AG04450 (cell line): ENCODE measurements at regions of chr10 and their contacts with region 1.

Region 1: GRCh38 chr10:3043512-3044368 is 23.6 kb upstream of the PFKP start:
- DNase-seq: no peak
- H3K4me3 ChIP-seq: no peak overlapping the region
- H3K27ac ChIP-seq: peak overlapping the region; percentile 40
- H3K27me3 ChIP-seq: no peaks in the 10 kb centered on the region
- CTCF ChIP-seq: peak; percentile 86

Region 2: DNA sequence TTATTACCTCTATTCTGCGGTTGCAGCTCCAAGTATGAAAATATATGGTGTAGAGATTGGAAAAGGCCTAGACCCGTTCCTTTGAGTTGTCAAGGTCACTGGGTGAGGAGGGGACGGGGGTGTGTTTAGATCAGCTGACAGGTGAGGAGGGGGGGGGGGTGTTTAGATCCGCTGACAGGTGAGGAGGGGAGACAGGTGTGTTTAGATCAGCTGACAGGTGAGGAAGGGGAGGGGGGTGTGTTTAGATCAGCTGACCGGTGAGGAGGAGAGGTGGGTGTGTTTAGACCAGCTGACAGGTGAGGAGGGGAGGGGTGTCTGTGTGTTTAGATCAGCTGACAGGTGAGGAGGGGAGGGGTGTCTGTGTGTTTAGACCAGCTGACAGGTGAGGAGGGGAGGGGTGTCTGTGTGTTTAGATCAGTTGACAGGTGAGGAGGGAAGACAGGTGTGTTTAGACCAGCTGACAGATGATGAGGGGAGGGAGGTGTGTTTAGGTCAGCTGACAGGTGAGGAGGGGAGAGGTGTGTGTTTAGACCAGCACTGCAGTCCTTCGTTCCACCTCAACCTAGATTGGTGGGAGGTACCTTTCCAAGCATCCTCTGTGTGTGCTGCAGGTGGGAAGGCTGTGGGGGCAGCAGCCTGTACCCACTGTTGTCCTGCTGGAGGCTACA is 651.5 kb before region 1 on chr10:
- CTCF ChIA-PET with region 1: no interaction called
- POLR2A ChIA-PET with region 1: no interaction called
- DNase-seq: no peak
- H3K4me3 ChIP-seq: no peak overlapping the region
- H3K27ac ChIP-seq: no peak overlapping the region
- H3K27me3 ChIP-seq: no peaks in the 10 kb centered on the region
- CTCF ChIP-seq: no peak

Region 3: DNA sequence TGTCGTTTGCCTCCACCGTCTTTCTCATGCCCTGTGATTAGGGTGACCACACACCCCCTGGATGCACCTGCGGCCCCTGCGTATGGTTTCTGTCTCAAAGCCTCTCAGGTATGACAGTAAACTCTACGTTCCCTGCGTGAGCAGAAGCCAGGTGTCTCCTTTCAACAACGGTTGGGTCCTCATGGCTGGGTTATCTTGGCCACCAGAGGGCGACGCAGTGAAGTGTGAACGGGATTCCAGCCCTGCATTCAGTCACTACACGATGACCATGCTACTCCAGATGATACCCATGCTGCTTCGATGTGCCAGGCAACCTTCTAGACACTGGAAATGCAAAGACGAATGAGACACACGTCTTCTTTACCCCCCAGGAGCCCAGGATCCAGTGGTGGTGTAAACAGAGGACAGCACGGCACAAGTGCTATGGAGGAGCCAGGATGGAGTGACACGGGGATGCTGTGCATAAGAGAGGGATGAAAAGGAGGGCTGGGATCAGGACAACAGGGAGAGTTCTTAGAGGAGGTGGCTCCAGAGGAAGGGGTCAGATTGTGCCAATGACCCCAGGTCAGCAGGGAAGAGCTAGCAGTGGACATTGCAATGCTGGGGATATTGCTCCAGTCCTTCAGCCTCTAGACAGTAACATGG is 204.5 kb before region 1 on chr10:
- CTCF ChIA-PET with region 1: interaction called, 18 read pairs
- POLR2A ChIA-PET with region 1: no interaction called
- DNase-seq: no peak
- H3K4me3 ChIP-seq: no peak overlapping the region
- H3K27ac ChIP-seq: no peak overlapping the region
- H3K27me3 ChIP-seq: no peaks in the 10 kb centered on the region
- CTCF ChIP-seq: peak; percentile 49

Region 4: DNA sequence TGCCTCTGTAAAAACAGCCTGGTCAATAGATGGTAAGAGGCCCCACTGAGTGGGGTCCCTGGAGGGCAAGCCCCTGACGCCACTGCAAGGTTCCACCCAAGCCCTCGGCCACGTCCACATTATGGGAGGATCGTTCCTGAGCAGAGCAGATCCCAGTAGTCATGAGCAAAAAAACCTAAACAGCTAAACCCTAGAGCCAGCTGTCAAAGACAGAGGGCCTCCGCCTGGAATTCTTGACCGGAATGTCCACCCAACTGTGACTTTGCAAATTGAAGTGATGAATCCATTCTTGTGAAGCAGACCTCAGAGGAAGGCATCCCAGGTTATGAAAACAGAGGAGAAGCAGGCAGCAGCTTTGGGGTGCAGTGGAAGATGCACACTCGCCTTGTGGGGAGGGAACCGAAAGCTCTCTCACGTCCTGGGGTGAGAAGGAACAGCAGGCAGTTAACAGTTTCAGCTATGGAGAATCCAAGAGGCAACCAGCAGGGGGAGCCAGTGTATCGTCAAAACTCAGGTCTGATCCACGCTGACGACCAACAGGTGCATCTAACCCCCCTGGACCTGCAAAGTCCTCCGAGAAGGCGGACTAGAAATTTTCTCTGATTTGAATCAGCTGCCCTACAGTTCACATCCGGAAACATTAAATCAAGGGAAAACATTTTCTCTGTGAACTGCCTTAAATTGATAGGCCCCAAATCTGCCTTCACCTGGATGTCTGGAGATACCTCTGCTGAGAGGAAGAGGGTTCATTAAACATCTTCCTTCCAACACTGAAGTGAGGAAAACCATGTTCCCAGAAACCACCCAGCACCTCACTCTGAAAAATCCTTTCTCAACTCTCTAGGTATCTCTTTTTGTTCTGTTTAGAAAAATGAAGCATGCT is 115.5 kb before region 1 on chr10:
- CTCF ChIA-PET with region 1: interaction called, 247 read pairs
- POLR2A ChIA-PET with region 1: no interaction called
- DNase-seq: peak; percentile 26
- H3K4me3 ChIP-seq: peak overlapping the region; percentile 23
- H3K27ac ChIP-seq: no peak overlapping the region
- H3K27me3 ChIP-seq: peaks cover 6% of the 10 kb centered on the region
- CTCF ChIP-seq: peak; percentile 87

Region 5: DNA sequence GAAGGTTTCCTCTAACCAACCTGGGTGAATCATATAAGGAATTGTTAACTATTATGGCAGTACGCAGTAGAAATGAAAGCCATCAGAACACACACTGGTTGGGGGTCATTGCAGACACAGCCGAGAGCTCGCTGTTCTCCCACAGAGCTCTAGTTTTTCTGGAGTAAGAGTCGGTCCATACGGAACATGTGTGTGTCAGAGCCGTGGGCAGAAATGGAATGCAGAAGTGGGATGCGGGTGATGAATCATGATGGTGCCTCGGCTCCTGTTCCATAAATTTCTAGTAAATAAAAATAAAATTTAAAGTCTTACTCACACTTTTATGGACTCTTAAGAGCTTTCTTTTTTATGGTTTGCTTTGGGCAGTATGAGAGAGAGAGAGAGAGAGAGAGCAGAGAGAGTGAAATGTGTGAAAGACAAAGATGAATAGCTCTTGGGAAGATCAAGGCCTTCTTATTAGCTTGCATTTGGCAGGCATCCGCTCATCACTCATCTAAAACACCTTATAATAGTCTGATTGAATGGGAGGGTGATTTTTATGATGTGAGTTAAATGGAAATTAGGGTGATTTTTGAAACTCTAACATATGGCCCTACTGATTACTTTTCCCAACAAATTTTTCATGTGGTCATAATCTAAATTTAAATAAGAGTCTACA is 75.2 kb before region 1 on chr10:
- CTCF ChIA-PET with region 1: interaction called, 10 read pairs
- POLR2A ChIA-PET with region 1: no interaction called
- DNase-seq: no peak
- H3K4me3 ChIP-seq: no peak overlapping the region
- H3K27ac ChIP-seq: no peak overlapping the region
- H3K27me3 ChIP-seq: no peaks in the 10 kb centered on the region
- CTCF ChIP-seq: no peak

Region 6: DNA sequence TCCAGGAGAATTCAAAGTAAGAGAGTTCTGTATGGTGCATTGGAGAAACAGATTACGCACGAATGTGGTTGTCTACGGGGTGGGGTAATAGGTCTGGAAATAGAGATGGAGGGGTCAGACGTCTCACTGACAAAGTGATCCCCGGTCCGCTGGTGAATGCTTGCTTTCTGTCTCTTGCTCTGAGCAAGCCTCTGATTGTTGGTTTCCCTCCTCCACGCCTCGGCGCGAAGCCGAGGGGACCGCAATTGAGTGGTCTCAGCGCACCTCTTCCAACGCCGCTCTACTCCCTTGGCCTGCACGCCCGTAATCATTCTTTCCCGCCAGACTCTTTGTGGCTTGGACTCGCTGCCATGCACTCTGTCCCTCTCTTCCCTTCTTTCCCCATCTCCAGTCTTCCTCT is 22.9 kb before region 1 on chr10:
- CTCF ChIA-PET with region 1: interaction called, 13 read pairs
- POLR2A ChIA-PET with region 1: no interaction called
- DNase-seq: no peak
- H3K4me3 ChIP-seq: no peak overlapping the region
- H3K27ac ChIP-seq: no peak overlapping the region
- H3K27me3 ChIP-seq: peaks cover 14% of the 10 kb centered on the region
- CTCF ChIP-seq: no peak

Region 7: GRCh38 chr10:3054183-3054850 is 10.6 kb after region 1 on chr10:
- CTCF ChIA-PET with region 1: interaction called, 25 read pairs
- POLR2A ChIA-PET with region 1: interaction called, 3 read pairs
- DNase-seq: no peak
- H3K4me3 ChIP-seq: no peak overlapping the region
- H3K27ac ChIP-seq: peak overlapping the region; percentile 33
- H3K27me3 ChIP-seq: no peaks in the 10 kb centered on the region
- CTCF ChIP-seq: no peak